Activated CD4-positive, alpha-beta T cell treated with anti-CD3 and anti-CD28 coated beads, Interleukin-2, amount 10 ng/mL, durations not matched to agents 24 days and 14 days (primary cell): ENCODE measurements at regions of chr14 and their contacts with region 1.

Region 1: DNA sequence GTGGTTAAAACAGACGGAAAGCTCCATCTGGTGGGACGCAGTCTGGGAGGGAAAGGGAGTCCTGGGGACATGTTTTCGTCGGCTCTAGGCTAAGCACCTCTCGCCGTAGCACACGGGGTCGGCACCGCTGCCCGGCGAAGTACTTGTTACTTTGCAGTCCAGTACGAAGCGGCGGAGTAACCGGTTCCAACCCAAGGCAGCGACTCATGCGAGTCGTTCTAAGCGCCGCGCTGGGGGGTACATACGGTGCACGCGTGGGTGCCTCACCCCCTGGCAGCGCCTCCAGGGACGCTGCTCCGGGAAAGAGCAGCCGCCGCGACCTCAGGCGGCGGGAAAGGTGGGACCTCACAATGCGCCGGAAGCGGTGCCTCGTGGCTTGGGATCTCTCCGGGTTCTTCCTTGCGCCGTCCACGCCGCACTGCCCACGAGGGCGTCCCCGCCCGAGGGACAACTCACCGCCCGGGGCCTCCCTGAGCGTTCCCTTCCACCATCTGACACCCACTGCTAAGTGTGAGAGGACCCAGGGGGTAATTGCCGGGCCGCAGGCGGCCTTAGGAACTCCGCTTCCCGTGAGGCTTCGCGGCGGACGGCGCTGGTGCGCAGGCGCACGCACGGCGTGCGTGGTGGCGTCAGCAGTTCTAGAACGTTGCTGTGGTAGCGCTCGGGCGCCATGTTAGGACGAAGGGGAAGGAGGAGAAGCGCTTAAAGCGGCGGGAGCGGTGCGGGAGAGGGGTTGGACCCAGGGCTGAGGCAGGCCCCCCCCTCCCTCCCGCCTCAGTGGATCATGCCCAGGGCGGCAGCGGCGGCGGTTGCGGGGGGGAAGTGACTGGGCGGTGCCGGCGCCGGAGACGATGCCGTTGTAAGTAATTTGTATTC is at the start of gene PAPOLA:
- DNase-seq: peak; percentile 99
- H3K4me3 Mint-ChIP-seq: peak within 1 kb of the TSS; percentile 91
- H3K27ac Mint-ChIP-seq: peak within 1 kb of the TSS; percentile 99
- H3K4me1 Mint-ChIP-seq: peaks cover 41% of the 10 kb centered on the region
- H3K27me3 Mint-ChIP-seq: peaks cover 17% of the 10 kb centered on the region
- total RNA-seq, gene PAPOLA: 204 and 210 TPM in 2 replicates

Region 2: GRCh38 chr14:96362965-96363756 is 138.8 kb before region 1 on chr14 and contains the starts of genes ATG2B and GSKIP:
- intact Hi-C with region 1: loop called (anchors 1 kb)
- DNase-seq: peak; percentile 99
- H3K4me3 Mint-ChIP-seq: peak within 1 kb of the TSS; percentile 96
- H3K27ac Mint-ChIP-seq: peak within 1 kb of the TSS; percentile 96
- H3K4me1 Mint-ChIP-seq: peaks cover 33% of the 10 kb centered on the region
- H3K27me3 Mint-ChIP-seq: no peaks in the 10 kb centered on the region
- total RNA-seq, gene ATG2B: 22.8 and 26.1 TPM in 2 replicates
- total RNA-seq, gene GSKIP: 16.3 and 19.3 TPM in 2 replicates

Region 3: DNA sequence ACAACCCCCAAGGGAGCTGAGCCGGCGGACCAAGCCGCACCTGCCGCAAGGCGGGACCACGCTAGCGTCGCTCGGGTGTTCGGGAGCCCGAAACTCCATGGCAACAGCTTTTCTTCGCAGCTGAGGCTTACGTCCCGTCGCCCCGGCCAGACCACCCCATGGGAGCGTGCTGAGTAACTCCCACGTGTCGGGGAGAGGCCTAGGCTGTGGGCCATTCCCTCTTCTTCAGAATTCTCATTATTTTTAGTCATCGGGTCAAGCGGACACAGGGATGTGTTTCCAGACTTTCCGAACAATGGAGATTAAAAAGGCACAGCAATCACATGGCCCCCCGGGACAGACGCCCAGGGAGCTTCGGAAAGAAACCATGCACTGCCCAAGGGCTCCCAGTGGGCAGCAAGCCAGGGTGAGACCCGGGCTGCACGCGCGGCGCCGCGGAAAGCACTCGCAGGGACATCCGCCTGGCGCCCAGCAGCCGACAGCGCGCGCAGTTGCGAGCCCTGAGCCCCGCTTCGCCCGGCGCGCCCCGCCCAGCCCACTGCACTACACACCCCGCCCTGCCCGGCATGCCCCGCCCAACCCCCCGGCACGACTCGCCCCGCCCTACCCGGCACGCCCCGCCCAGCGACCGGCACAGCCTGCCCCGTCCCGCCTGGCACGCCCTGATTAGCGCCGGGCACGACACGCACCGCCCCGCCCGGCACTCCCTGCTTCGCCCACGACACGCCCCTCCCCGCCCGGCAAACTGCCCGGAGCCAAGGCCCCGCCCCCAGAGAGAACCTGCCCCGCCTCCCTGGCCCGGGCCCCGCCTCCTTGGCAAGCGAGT is 110.5 kb before region 1 on chr14:
- intact Hi-C with region 1: loop called (anchors 1 kb)
- DNase-seq: peak; percentile 100
- H3K4me3 Mint-ChIP-seq: peak overlapping the region; percentile 91
- H3K27ac Mint-ChIP-seq: peak overlapping the region; percentile 77
- H3K4me1 Mint-ChIP-seq: peaks cover 9% of the 10 kb centered on the region
- H3K27me3 Mint-ChIP-seq: peaks cover 16% of the 10 kb centered on the region

Region 4: DNA sequence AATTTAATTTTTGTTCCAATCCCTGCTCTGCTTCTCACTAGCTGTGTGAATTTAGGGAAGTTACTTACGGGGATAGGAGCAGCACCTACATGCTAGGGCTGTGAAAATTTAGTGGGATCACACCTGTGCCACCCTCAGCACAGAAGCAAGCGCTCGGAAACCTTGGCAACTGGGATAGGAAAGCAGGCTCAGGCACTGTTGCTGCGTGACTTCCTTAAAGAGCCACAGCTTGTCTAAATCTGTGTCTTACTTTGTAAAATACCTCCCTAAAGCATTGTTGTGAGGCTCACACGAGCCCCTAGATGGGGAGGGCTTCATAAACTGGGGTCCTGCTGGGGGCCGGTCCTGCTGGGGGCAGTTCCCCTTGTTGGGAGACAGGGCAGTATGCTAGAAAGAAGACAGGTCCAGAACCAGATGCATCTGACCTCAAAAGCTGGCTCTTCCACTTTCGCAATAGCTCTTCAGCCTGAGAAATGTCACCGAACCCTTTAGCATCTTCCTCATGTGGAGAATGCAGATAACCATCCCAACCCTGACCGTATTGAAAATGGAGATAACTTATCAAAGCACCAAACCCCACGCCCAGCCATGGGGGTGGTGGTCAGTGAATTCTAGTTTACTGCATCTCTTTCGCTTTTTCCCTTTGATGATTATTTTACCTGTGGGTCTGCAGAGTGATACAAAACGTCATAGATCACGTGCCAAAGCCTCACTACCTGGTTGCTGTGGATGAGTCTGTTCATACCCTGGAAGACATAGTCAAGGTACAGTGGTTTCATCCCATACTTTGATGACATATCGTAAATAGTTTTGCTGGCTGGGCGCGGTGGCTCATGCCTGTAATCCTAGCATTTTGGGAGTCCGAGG is 55.9 kb before region 1 on chr14:
- intact Hi-C with region 1: no loop called
- DNase-seq: no peak
- H3K4me3 Mint-ChIP-seq: no peak overlapping the region
- H3K27ac Mint-ChIP-seq: no peak overlapping the region
- H3K4me1 Mint-ChIP-seq: no peaks in the 10 kb centered on the region
- H3K27me3 Mint-ChIP-seq: no peaks in the 10 kb centered on the region

Region 5: GRCh38 chr14:96538097-96538989 is 36.4 kb after region 1 on chr14:
- intact Hi-C with region 1: loop called (anchors 5 kb)
- DNase-seq: no peak
- H3K4me3 Mint-ChIP-seq: no peak overlapping the region
- H3K27ac Mint-ChIP-seq: no peak overlapping the region
- H3K4me1 Mint-ChIP-seq: peaks cover 10% of the 10 kb centered on the region
- H3K27me3 Mint-ChIP-seq: no peaks in the 10 kb centered on the region

Region 6: GRCh38 chr14:96796851-96797581 is 295.0 kb after region 1 on chr14 and contains the start of gene VRK1:
- intact Hi-C with region 1: loop called (anchors 2 kb)
- DNase-seq: peak; percentile 98
- H3K4me3 Mint-ChIP-seq: peak within 1 kb of the TSS; percentile 97
- H3K27ac Mint-ChIP-seq: peak within 1 kb of the TSS; percentile 93
- H3K4me1 Mint-ChIP-seq: peaks cover 29% of the 10 kb centered on the region
- H3K27me3 Mint-ChIP-seq: peaks cover 7% of the 10 kb centered on the region
- total RNA-seq, gene VRK1: 76.7 and 77.0 TPM in 2 replicates